Naive thymus-derived CD4-positive, alpha-beta T cell (primary cell): ENCODE measurements at regions of chr2 and their contacts with region 1.

Region 1: GRCh38 chr2:54697934-54698333 is 25.5 kb upstream of the EML6 start:
- DNase-seq: no peak
- ATAC-seq: no peak
- H3K4me3 ChIP-seq: no peak overlapping the region
- H3K4me3 Mint-ChIP-seq: no peak overlapping the region
- H3K27ac ChIP-seq: no peak overlapping the region
- H3K27ac Mint-ChIP-seq: no peak overlapping the region
- H3K4me1 ChIP-seq: no peaks in the 10 kb centered on the region
- H3K4me1 Mint-ChIP-seq: peaks cover 0 to 3% (median 0%) of the 10 kb centered on the region in 7 donors
- H3K27me3 ChIP-seq: no peaks in the 10 kb centered on the region
- H3K27me3 Mint-ChIP-seq: peaks cover 0 to 59% (median 7%) of the 10 kb centered on the region in 5 donors

Region 2: GRCh38 chr2:54680397-54681041 is 17.4 kb before region 1 on chr2:
- CTCF ChIA-PET with region 1: interaction called, 3 read pairs
- POLR2A ChIA-PET with region 1: interaction called, 3 read pairs
- intact Hi-C with region 1: loop called in 1 of 2 experiments (anchors 2 kb)
- DNase-seq: peak in 1 of 9 donors; percentile 53
- ATAC-seq: peak; percentile 24
- H3K4me3 ChIP-seq: no peak overlapping the region
- H3K4me3 Mint-ChIP-seq: peak overlapping the region in 1 of 10 donors; percentile 91
- H3K27ac ChIP-seq: no peak overlapping the region
- H3K27ac Mint-ChIP-seq: peak overlapping the region in 1 of 9 donors; percentile 82
- H3K4me1 ChIP-seq: no peaks in the 10 kb centered on the region
- H3K4me1 Mint-ChIP-seq: peaks cover 4 to 58% (median 7%) of the 10 kb centered on the region in 7 donors
- H3K27me3 ChIP-seq: no peaks in the 10 kb centered on the region
- H3K27me3 Mint-ChIP-seq: peaks cover 0 to 51% (median 4%) of the 10 kb centered on the region in 5 donors

Region 3: GRCh38 chr2:54755641-54756326 is 57.9 kb after region 1 on chr2:
- CTCF ChIA-PET with region 1: no interaction called
- POLR2A ChIA-PET with region 1: no interaction called
- intact Hi-C with region 1: no loop called
- DNase-seq: no peak
- ATAC-seq: no peak
- H3K4me3 ChIP-seq: no peak overlapping the region
- H3K4me3 Mint-ChIP-seq: no peak overlapping the region
- H3K27ac ChIP-seq: no peak overlapping the region
- H3K27ac Mint-ChIP-seq: no peak overlapping the region
- H3K4me1 ChIP-seq: no peaks in the 10 kb centered on the region
- H3K4me1 Mint-ChIP-seq: peaks cover 0 to 6% (median 0%) of the 10 kb centered on the region in 7 donors
- H3K27me3 ChIP-seq: no peaks in the 10 kb centered on the region
- H3K27me3 Mint-ChIP-seq: peaks cover 0 to 18% (median 0%) of the 10 kb centered on the region in 5 donors

Region 4: DNA sequence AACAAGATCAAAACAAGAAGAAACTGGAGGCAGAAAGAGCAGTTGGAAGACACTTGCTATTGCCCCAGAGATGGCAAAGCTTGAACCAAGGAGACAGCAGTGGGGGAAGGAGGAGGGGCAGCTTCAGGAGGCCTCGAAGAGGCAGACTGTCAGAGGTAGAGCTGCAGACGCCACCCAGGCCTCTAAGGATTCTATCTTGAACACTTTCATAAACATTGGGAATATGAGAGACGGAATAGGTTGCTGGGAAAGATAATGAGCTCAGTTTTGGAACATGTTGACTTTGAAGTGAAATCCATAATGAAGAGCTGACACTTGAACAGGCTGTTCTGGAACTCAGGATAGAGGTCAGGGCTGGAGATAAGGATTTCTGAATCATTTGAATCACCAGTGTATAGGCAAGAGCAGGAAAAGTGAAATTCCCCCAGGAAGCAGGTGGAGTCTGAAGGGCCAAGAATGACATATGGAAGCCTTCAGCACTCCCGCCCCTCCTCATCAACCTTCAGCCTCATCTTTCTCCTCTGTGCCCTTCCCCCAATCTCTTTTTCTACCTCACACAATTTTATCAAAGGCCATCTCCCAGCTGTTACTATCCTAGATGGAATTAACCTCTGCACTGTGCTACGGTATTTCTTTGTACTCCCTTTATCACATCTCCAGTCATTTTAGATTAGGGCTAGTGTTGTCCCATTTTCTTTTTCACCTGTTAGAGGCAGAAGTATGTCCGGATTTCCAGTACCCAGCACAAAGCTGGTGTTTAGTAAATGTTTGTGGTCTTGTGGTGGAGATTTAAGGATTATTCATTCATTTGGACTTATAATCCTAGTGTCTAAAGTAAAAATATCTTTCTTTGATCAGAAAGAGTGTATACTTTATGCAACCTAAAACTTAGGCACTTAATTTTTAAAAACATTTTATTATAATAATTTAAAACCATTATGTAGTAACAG is 399.8 kb after region 1 on chr2:
- CTCF ChIA-PET with region 1: no interaction called
- POLR2A ChIA-PET with region 1: no interaction called
- intact Hi-C with region 1: no loop called
- DNase-seq: no peak
- ATAC-seq: no peak
- H3K4me3 ChIP-seq: no peak overlapping the region
- H3K4me3 Mint-ChIP-seq: no peak overlapping the region
- H3K27ac ChIP-seq: no peak overlapping the region
- H3K27ac Mint-ChIP-seq: no peak overlapping the region
- H3K4me1 ChIP-seq: no peaks in the 10 kb centered on the region
- H3K4me1 Mint-ChIP-seq: peaks cover 0 to 14% (median 7%) of the 10 kb centered on the region in 7 donors
- H3K27me3 ChIP-seq: no peaks in the 10 kb centered on the region
- H3K27me3 Mint-ChIP-seq: no peaks in the 10 kb centered on the region